ENCODE measurements at regions of chr19 and their contacts with region 1.

Region 1: DNA sequence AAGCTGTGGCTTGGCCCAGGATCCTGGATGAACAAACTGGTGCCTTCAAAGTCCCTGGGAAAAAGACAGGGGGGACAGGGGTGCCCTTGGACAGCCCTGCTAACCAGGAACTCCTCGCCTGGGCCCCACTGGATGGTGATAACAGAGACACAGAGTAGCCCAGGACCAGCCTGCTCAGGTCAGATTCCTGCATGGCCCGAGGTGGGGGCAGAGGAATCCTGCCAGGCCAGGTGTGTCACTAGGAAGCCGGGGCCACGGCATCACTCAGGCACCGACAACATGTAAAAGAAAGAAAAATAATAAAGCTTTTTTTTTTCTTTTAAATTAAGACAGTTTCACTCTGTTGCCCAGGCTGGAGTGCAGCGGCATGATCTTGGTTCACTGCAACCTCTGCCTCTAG is 5.6 kb upstream of the RPL18A start:
- DNase-seq: no peak
- ATAC-seq: no peak
- H3K4me3 ChIP-seq: no peak overlapping the region
- H3K27ac ChIP-seq: no peak overlapping the region
- H3K4me1 ChIP-seq: no peaks in the 10 kb centered on the region
- H3K27me3 ChIP-seq: no peaks in the 10 kb centered on the region
- CTCF ChIP-seq: no peak

Region 2: GRCh38 chr19:17582613-17583012 is 271.4 kb before region 1 on chr19:
- intact Hi-C with region 1: no loop called
- DNase-seq: no peak
- ATAC-seq: no peak
- H3K4me3 ChIP-seq: no peak overlapping the region
- H3K27ac ChIP-seq: no peak overlapping the region
- H3K4me1 ChIP-seq: no peaks in the 10 kb centered on the region
- H3K27me3 ChIP-seq: no peaks in the 10 kb centered on the region
- CTCF ChIP-seq: no peak

Region 3: GRCh38 chr19:17784201-17785008 is 69.7 kb before region 1 on chr19:
- intact Hi-C with region 1: loop called in 1 of 3 experiments (anchors 5 kb)
- DNase-seq: peak in 5 of 6 donors; percentile 32 to 77 (median 63)
- ATAC-seq: peak in 3 of 4 donors; percentile 77 to 90 (median 78)
- H3K4me3 ChIP-seq: no peak overlapping the region
- H3K27ac ChIP-seq: no peak overlapping the region
- H3K4me1 ChIP-seq: no peaks in the 10 kb centered on the region
- H3K27me3 ChIP-seq: no peaks in the 10 kb centered on the region
- CTCF ChIP-seq: peak; percentile 61 to 71 (median 66)